ENCODE measurements at regions of chr10 and their contacts with region 1.

Region 1: GRCh38 chr10:118241229-118242137 is 100.6 kb downstream of the FAM204A start:
- DNase-seq: peak; percentile 21 to 76 (median 63)
- ATAC-seq: no peak
- H3K4me3 ChIP-seq: no peak overlapping the region
- H3K4me3 Mint-ChIP-seq: no peak overlapping the region
- H3K27ac ChIP-seq: no peak overlapping the region
- H3K27ac Mint-ChIP-seq: no peak overlapping the region
- H3K4me1 ChIP-seq: no peaks in the 10 kb centered on the region
- H3K4me1 Mint-ChIP-seq: no peaks in the 10 kb centered on the region
- H3K27me3 ChIP-seq: peaks cover 0 to 9% of the 10 kb centered on the region in 2 experiments
- H3K27me3 Mint-ChIP-seq: peaks cover 34% of the 10 kb centered on the region
- CTCF ChIP-seq: peak; percentile 97

Region 2: GRCh38 chr10:117442944-117443685 is 798.4 kb before region 1 on chr10:
- CTCF ChIA-PET with region 1: interaction called, 11 read pairs
- POLR2A ChIA-PET with region 1: no interaction called
- intact Hi-C with region 1: loop called in 1 of 2 experiments (anchors 2 kb)
- DNase-seq: peak; percentile 12 to 64 (median 48)
- ATAC-seq: peak; percentile 40
- H3K4me3 ChIP-seq: no peak overlapping the region
- H3K4me3 Mint-ChIP-seq: no peak overlapping the region
- H3K27ac ChIP-seq: no peak overlapping the region
- H3K27ac Mint-ChIP-seq: no peak overlapping the region
- H3K4me1 ChIP-seq: no peaks in the 10 kb centered on the region
- H3K4me1 Mint-ChIP-seq: peaks cover 4% of the 10 kb centered on the region
- H3K27me3 ChIP-seq: no peaks in the 10 kb centered on the region
- H3K27me3 Mint-ChIP-seq: peaks cover 26% of the 10 kb centered on the region
- CTCF ChIP-seq: peak; percentile 73

Region 3: GRCh38 chr10:117537436-117537903 is 704.0 kb before region 1 on chr10:
- CTCF ChIA-PET with region 1: interaction called, 5 read pairs
- POLR2A ChIA-PET with region 1: no interaction called
- intact Hi-C with region 1: loop called in 1 of 2 experiments (anchors 1 kb)
- DNase-seq: peak in 1 of 9 experiments; percentile 12
- ATAC-seq: no peak
- H3K4me3 ChIP-seq: no peak overlapping the region
- H3K4me3 Mint-ChIP-seq: no peak overlapping the region
- H3K27ac ChIP-seq: no peak overlapping the region
- H3K27ac Mint-ChIP-seq: no peak overlapping the region
- H3K4me1 ChIP-seq: peaks cover 3% of the 10 kb centered on the region
- H3K4me1 Mint-ChIP-seq: peaks cover 10% of the 10 kb centered on the region
- H3K27me3 ChIP-seq: peaks cover 14 to 18% of the 10 kb centered on the region in 2 experiments
- H3K27me3 Mint-ChIP-seq: peaks cover 57% of the 10 kb centered on the region
- CTCF ChIP-seq: no peak

Region 4: DNA sequence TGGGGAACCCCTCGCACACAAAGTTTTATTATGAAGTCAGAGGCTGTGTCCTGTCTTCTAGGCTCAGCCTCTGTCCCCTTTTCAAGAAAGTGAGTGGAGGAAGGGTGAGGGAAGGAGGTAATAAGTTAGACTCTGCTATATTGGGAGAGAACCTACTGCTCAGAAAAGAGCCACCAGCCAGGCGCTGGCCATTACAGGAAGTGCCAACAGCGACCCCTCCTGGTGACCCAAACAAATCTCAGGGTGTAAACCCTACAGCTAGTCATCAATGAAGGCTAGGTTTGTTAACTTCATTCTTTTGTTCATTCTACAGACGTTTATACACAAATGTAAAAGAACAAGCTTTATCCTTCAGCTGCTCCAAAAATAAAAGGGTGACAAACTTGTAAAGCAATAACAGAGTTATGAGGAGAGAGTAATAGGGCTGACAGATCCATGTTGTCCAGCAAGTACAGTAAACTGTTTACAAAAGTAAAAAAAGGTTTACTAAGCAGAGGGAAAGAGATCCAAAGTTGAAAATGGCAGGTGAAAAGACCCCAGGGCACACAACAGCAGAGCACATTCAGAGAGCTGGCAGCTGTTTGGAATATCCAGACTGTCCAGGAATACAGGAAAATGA is 17.9 kb after region 1 on chr10:
- CTCF ChIA-PET with region 1: interaction called, 10 read pairs
- POLR2A ChIA-PET with region 1: no interaction called
- intact Hi-C with region 1: no loop called
- DNase-seq: peak in 2 of 9 experiments; percentile 6 to 12
- ATAC-seq: no peak
- H3K4me3 ChIP-seq: no peak overlapping the region
- H3K4me3 Mint-ChIP-seq: no peak overlapping the region
- H3K27ac ChIP-seq: no peak overlapping the region
- H3K27ac Mint-ChIP-seq: no peak overlapping the region
- H3K4me1 ChIP-seq: no peaks in the 10 kb centered on the region
- H3K4me1 Mint-ChIP-seq: no peaks in the 10 kb centered on the region
- H3K27me3 ChIP-seq: no peaks in the 10 kb centered on the region
- H3K27me3 Mint-ChIP-seq: peaks cover 27% of the 10 kb centered on the region
- CTCF ChIP-seq: no peak